Lower leg skin (tissue), 4 donors: ENCODE measurements at regions of chr1 and their contacts with region 1.

Region 1: GRCh38 chr1:21189906-21190500 is 13.3 kb upstream of the EIF4G3 start:
- DNase-seq: peak in 1 of 2 donors; percentile 17
- H3K4me3 ChIP-seq: no peak overlapping the region
- CTCF ChIP-seq: no peak
- POLR2A ChIP-seq: no peak

Region 2: GRCh38 chr1:20521960-20522861 is 667.8 kb before region 1 on chr1:
- intact Hi-C with region 1: loop called (anchors 10 kb)
- DNase-seq: peak; percentile 80 to 93
- H3K4me3 ChIP-seq: no peak overlapping the region
- CTCF ChIP-seq: peak in 2 of 3 donors; percentile 26 to 71
- POLR2A ChIP-seq: no peak

Region 3: DNA sequence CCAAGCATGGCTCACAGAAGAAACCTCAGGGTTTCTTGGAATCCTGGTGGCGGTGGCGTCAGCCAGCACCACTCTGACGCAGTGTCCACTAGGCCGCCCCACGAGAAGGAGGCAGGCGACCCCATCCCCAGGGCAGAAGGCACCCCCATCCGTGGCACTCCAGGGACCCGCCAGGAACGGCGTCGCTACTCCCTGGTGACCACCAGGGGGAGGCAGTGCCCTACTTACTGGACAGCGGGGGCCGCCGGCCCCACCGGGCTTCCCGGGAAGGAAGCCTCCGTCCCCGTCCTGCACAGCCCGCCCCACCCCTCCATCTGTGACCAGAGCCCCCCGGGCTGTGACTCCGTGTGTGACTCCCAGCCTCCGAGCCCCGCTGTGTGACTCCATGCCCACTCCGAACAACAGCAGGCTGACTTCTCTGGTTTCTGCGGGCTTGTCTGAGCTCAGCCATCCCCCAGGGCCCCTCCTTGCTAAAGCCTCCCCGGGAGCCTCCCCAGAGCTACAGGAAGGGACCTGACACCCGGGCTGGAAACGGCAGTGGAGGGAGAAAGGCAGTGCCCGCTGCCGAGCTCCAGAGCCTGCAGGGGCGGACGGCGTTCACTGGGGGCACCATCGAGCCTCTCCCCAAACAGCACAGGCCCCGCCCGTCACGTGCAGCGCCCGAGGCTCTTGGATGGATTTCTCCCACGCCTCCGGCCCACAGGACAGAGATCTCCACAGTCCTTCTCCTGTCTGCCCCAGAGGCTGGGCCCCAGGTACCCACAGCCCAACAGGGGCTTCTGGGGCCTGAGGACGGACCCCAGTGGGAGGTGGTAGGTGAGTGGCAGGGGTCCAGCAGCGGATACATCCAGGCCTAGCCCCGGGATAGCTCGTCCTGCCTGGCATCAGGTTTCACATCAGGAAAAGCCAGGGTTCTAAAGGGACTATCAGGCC is 493.3 kb before region 1 on chr1:
- intact Hi-C with region 1: loop called (anchors 10 kb)
- DNase-seq: peak; percentile 85 to 98
- H3K4me3 ChIP-seq: peak overlapping the region; percentile 35
- CTCF ChIP-seq: peak in 2 of 3 donors; percentile 5 to 51
- POLR2A ChIP-seq: no peak

Region 4: GRCh38 chr1:20981915-20982314 is 208.1 kb before region 1 on chr1:
- intact Hi-C with region 1: loop called (anchors 10 kb)
- DNase-seq: no peak
- H3K4me3 ChIP-seq: no peak overlapping the region
- CTCF ChIP-seq: no peak
- POLR2A ChIP-seq: no peak

Region 5: DNA sequence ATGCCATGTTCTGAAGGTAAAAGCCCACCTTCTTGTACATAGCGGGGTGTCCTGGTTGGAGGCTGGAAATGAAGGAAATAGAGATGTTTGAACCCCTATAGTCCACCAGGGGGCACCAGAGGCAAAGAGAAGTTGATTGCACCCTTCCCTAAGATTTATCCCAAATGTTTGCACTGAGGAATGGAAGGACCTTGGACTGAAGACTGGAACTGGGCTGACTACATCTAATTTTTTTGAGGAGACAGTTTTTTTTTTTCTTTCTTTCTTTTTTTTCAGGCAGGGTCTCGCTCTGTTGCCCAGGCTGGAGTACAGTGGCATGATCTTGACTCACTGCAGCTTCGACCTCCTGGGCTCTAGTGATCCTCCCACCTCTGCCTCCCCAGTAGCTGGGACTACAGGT is 42.0 kb after region 1 on chr1:
- intact Hi-C with region 1: no loop called
- DNase-seq: peak in 1 of 2 donors; percentile 53
- H3K4me3 ChIP-seq: no peak overlapping the region
- CTCF ChIP-seq: peak in 1 of 3 donors; percentile 64
- POLR2A ChIP-seq: no peak